PC-3 (cell line): ENCODE measurements at regions of chr5 and their contacts with region 1.

Region 1: GRCh38 chr5:174951146-174951780 is 226.9 kb downstream of the MSX2 start:
- DNase-seq: peak; percentile 67
- ATAC-seq: peak; percentile 69
- H3K4me3 ChIP-seq: no peak overlapping the region
- H3K27ac ChIP-seq: no peak overlapping the region
- H3K4me1 ChIP-seq: no peaks in the 10 kb centered on the region
- H3K27me3 ChIP-seq: peaks cover 15% of the 10 kb centered on the region; the same call in 1 of the 2 replicates
- CTCF ChIP-seq: peak; percentile 82

Region 2: DNA sequence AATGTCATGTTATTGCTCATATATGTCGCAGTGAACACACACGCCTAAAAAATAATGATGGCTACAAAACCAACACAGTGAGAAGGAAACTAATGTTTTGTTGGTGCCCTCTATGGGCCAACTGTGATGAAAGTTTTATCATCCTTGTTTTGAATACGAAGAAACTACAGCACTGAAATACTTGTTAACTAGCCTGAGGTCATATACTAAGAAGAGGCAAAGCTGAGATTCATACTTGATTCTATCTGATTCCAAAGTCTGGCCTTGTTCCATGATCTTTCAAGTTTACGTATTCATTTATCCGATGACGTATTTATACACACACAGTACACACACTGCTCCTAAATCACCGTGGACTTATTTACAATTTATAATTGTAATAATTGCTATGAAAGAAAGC is 508.9 kb after region 1 on chr5:
- CTCF ChIA-PET with region 1: no interaction called
- POLR2A ChIA-PET with region 1: no interaction called
- intact Hi-C with region 1: loop called (anchors 1 kb)
- DNase-seq: peak; percentile 59
- ATAC-seq: peak; percentile 48
- H3K4me3 ChIP-seq: no peak overlapping the region
- H3K27ac ChIP-seq: no peak overlapping the region
- H3K4me1 ChIP-seq: no peaks in the 10 kb centered on the region
- H3K27me3 ChIP-seq: peaks cover 5% of the 10 kb centered on the region; the same call in 1 of the 2 replicates
- CTCF ChIP-seq: peak; percentile 61